Caco-2 (cell line): ENCODE measurements at regions of chr14 and their contacts with region 1.

Region 1: GRCh38 chr14:51979088-51979709 is 10.1 kb upstream of the RTRAF start:
- DNase-seq: peak; percentile 73 to 86
- H3K4me3 ChIP-seq: no peak overlapping the region
- H3K4me3 Mint-ChIP-seq: no peak overlapping the region
- H3K27ac Mint-ChIP-seq: no peak overlapping the region
- H3K4me1 ChIP-seq: peaks cover 9% of the 10 kb centered on the region; the same call in 1 of the 2 replicates
- H3K4me1 Mint-ChIP-seq: no peaks in the 10 kb centered on the region
- H3K27me3 ChIP-seq: no peaks in the 10 kb centered on the region
- H3K27me3 Mint-ChIP-seq: no peaks in the 10 kb centered on the region
- CTCF ChIP-seq: peak; percentile 78 to 89

Region 2: DNA sequence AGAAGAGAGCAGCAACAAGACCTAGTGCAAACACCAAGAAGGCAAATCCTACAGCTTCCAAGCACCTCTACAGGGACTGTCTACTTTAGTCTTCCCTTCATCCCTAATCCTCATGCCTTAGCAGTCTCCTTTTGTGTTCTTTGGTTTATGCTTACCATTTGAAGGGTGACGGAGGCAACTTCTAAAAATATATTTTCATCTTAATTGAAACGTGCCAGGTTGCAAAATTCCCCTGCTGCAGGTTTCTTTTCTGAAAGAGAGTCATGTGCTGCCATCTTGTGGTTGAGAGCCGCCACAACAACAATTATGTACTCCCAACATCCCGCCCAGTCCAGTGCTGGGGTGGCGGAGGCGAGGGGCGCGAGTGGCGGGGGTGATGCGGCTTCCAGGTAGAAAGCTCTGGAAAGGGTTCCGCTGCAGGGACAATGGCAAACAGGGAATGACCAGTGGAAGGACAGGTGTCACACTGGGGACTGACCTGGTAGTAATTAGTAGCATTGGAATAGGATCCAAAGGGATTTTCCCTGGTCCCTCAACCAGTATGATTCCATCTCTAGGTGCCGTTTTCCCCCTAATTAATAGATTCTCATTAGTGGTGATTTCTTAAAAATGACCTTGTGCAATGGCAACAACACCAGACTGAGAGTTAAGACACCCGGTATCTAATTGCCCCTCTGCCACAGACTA is 199.1 kb before region 1 on chr14:
- CTCF ChIA-PET with region 1: interaction called, 4 read pairs
- POLR2A ChIA-PET with region 1: no interaction called
- intact Hi-C with region 1: loop called (anchors 1 kb)
- DNase-seq: peak; percentile 64 to 77
- H3K4me3 ChIP-seq: no peak overlapping the region
- H3K4me3 Mint-ChIP-seq: peak overlapping the region; percentile 38
- H3K27ac Mint-ChIP-seq: no peak overlapping the region
- H3K4me1 ChIP-seq: no peaks in the 10 kb centered on the region
- H3K4me1 Mint-ChIP-seq: peaks cover 8% of the 10 kb centered on the region
- H3K27me3 ChIP-seq: no peaks in the 10 kb centered on the region
- H3K27me3 Mint-ChIP-seq: peaks cover 3% of the 10 kb centered on the region
- CTCF ChIP-seq: peak; percentile 79 to 87

Region 3: DNA sequence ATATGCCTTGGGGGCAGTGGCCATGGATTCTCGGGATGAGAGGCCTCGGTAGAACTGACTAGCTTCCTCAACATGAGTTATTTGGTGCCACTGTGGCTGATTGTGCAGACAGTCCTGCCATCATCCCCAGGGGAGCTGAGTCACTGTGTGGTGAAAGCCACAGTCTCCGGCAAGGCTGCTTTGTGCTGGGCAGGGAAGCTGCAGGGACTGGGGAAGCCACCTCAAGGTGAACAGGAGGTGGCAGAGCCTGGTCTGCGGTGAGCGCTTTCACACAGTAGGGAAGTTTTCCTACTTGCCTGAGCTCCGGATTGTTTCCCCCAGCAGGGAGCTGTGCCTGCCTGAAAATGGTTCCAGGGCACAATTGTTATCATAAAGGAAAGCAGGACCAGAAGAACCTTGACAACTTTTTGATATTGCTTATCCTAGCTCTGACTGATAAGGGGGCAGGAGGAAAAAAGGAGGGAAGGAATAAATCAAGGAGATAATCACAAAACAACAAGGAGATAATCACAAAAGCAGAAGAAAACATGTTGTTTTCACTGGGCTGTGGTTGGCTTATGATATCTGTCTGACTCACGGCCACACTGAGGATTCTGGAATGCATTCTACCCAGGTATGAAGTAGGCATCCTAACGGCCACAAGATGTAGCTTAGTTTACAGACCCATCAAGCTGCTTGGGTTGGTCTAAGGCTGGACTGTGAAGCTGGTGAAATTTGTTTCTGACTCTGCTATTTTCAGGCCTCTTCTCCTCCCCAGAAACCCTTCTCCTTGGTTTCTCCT is 151.0 kb before region 1 on chr14:
- CTCF ChIA-PET with region 1: no interaction called
- POLR2A ChIA-PET with region 1: no interaction called
- intact Hi-C with region 1: loop called (anchors 5 kb)
- DNase-seq: no peak
- H3K4me3 ChIP-seq: no peak overlapping the region
- H3K4me3 Mint-ChIP-seq: no peak overlapping the region
- H3K27ac Mint-ChIP-seq: no peak overlapping the region
- H3K4me1 ChIP-seq: no peaks in the 10 kb centered on the region
- H3K4me1 Mint-ChIP-seq: no peaks in the 10 kb centered on the region
- H3K27me3 ChIP-seq: no peaks in the 10 kb centered on the region
- H3K27me3 Mint-ChIP-seq: no peaks in the 10 kb centered on the region
- CTCF ChIP-seq: no peak

Region 4: GRCh38 chr14:51865953-51866747 is 113.0 kb before region 1 on chr14:
- CTCF ChIA-PET with region 1: interaction called, 11 read pairs
- POLR2A ChIA-PET with region 1: no interaction called
- intact Hi-C with region 1: loop called (anchors 2 kb)
- DNase-seq: peak; percentile 90 to 93
- H3K4me3 ChIP-seq: no peak overlapping the region
- H3K4me3 Mint-ChIP-seq: no peak overlapping the region
- H3K27ac Mint-ChIP-seq: no peak overlapping the region
- H3K4me1 ChIP-seq: peaks cover 37% of the 10 kb centered on the region
- H3K4me1 Mint-ChIP-seq: peaks cover 10% of the 10 kb centered on the region
- H3K27me3 ChIP-seq: no peaks in the 10 kb centered on the region
- H3K27me3 Mint-ChIP-seq: no peaks in the 10 kb centered on the region
- CTCF ChIP-seq: no peak